ENCODE measurements at regions of chr1 and their contacts with region 1.

Region 1: DNA sequence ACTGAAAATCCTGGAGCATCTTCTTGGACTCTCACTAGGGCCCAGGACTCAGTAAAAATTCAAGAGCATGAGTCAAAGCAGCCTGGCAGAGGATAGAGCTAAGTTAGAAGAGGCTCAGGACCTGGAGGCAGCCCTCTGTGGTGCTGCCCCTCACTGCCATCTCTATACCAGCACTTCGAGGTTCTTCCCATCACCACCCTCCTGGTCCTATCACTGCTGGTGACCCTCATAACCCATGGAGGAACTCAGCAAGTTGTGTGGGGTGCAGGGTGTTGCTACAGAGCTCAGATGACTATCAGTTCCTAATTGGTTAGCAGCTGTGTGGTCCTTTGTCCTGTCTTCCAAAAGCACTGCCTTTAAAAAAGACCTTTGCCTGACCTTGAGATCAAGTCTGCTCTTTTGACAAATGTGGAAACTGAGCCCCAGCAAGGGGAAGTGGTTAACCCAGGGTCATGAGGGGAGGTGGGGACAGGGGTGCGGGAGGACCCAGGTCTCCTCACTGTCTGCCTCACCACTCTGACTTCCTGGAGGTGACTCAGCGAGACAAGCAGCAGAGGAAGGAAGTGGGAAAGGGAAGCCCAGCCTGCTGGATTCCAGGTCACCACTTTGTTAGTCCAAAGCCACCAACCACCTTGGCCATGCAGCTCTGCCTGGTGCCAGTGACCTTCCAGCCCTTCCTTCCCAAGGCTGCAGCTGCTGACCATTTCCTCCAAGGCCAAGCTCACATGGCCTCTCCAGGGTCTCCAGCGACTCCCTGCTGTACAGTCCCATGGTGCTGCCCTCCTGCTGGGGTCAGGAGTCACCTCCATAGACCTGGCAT is 199.4 kb upstream of the EDN2 start:
- DNase-seq: peak; percentile 57
- H3K4me3 Mint-ChIP-seq: peak overlapping the region; percentile 19
- H3K27ac Mint-ChIP-seq: peak overlapping the region; percentile 76
- H3K4me1 Mint-ChIP-seq: peaks cover 90% of the 10 kb centered on the region
- H3K27me3 Mint-ChIP-seq: no peaks in the 10 kb centered on the region

Region 2: DNA sequence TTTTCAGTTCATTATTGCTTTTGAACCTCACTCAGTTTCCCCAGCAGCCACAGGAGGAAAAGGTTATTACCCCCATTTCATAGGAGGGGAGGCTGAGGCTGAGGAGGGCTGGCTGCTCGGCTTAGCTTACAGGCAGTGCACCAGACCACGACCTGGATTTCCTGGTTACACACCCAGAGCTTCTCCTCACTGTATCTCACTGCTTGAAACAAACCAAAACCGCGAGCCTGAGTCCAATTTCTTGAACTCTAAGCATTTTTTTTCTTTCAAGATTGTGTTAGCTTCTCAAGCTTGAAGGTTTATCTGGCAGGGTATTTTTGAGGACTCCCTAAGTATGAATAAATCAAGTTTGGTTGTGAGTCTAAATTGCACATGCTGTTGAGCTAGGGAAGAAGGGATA is 10.5 kb before region 1 on chr1:
- CTCF ChIA-PET with region 1: interaction called, 11 read pairs
- DNase-seq: peak; percentile 77
- H3K4me3 Mint-ChIP-seq: peak overlapping the region; percentile 70
- H3K27ac Mint-ChIP-seq: peak overlapping the region; percentile 95
- H3K4me1 Mint-ChIP-seq: peaks cover 98% of the 10 kb centered on the region
- H3K27me3 Mint-ChIP-seq: no peaks in the 10 kb centered on the region